AG04450 (cell line): ENCODE measurements at regions of chr12 and their contacts with region 1.

Region 1: DNA sequence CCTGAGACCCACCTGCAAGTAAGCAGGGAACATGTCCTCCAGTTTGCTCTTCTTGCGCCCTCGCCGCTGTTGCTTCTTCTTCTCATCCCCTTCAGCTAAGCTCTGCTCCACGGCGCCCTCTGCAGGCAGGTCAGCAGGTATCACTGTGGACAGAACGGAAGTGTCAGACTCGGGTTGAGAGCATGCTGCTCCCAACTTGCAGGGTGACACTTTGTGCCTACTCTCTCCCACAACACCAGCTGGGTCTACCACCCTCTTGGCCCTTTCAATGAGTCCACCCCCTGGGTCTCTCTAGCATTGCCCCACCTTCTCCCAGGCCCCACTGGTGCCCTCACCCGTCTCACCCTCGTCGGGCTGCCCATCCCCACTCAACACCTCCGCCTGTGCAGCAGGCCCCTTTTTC is 16.7 kb downstream of the KMT2D start:
- DNase-seq: no peak
- H3K4me3 ChIP-seq: no peak overlapping the region
- H3K27ac ChIP-seq: no peak overlapping the region
- H3K27me3 ChIP-seq: no peaks in the 10 kb centered on the region
- CTCF ChIP-seq: peak; percentile 79

Region 2: GRCh38 chr12:49031553-49032162 is 12.2 kb before region 1 on chr12:
- CTCF ChIA-PET with region 1: interaction called, 11 read pairs
- POLR2A ChIA-PET with region 1: interaction called, 3 read pairs
- DNase-seq: no peak
- H3K4me3 ChIP-seq: no peak overlapping the region
- H3K27ac ChIP-seq: no peak overlapping the region
- H3K27me3 ChIP-seq: no peaks in the 10 kb centered on the region
- CTCF ChIP-seq: no peak